Vagina (tissue), 2 donors: ENCODE measurements at regions of chr16 and their contacts with region 1.

Region 1: DNA sequence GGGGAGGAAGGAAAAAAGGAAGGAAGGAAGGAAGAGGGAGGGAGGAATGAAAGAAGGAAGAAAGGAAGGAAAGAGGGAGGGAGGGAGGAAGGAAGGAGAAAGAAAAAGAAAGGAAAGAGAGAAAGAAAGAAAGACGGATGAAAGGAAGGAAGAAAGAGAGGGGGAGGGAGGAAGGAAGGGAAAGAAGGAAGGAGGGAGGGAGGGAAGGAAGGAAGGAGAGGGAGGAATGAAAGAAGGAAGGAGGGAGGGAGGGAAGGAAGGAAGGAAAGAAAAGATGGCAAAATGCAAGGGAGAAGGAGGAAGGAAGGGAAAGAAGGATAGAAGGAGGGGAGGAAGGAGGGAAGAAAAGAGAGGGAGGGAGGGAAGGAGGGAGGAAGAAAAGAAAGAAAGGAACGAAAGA is 257.3 kb upstream of the C16orf82 start:
- DNase-seq: no peak
- H3K4me3 ChIP-seq: no peak overlapping the region
- H3K27ac ChIP-seq: no peak overlapping the region
- H3K4me1 ChIP-seq: no peaks in the 10 kb centered on the region
- H3K27me3 ChIP-seq: no peaks in the 10 kb centered on the region
- CTCF ChIP-seq: no peak
- POLR2A ChIP-seq: no peak

Region 2: GRCh38 chr16:26569793-26570192 is 239.7 kb before region 1 on chr16:
- intact Hi-C with region 1: no loop called
- DNase-seq: no peak
- H3K4me3 ChIP-seq: no peak overlapping the region
- H3K27ac ChIP-seq: no peak overlapping the region
- H3K4me1 ChIP-seq: no peaks in the 10 kb centered on the region
- H3K27me3 ChIP-seq: no peaks in the 10 kb centered on the region
- CTCF ChIP-seq: no peak
- POLR2A ChIP-seq: no peak

Region 3: GRCh38 chr16:26742040-26742439 is 67.4 kb before region 1 on chr16:
- intact Hi-C with region 1: loop called (anchors 2 kb)
- DNase-seq: no peak
- H3K4me3 ChIP-seq: no peak overlapping the region
- H3K27ac ChIP-seq: no peak overlapping the region
- H3K4me1 ChIP-seq: no peaks in the 10 kb centered on the region
- H3K27me3 ChIP-seq: no peaks in the 10 kb centered on the region
- CTCF ChIP-seq: no peak
- POLR2A ChIP-seq: no peak

Region 4: GRCh38 chr16:27033281-27033979 is 224.0 kb after region 1 on chr16:
- intact Hi-C with region 1: no loop called
- DNase-seq: no peak
- H3K4me3 ChIP-seq: no peak overlapping the region
- H3K27ac ChIP-seq: no peak overlapping the region
- H3K4me1 ChIP-seq: no peaks in the 10 kb centered on the region
- H3K27me3 ChIP-seq: no peaks in the 10 kb centered on the region
- CTCF ChIP-seq: no peak
- POLR2A ChIP-seq: no peak